ENCODE measurements at regions of chr2 and their contacts with region 1.

Region 1: DNA sequence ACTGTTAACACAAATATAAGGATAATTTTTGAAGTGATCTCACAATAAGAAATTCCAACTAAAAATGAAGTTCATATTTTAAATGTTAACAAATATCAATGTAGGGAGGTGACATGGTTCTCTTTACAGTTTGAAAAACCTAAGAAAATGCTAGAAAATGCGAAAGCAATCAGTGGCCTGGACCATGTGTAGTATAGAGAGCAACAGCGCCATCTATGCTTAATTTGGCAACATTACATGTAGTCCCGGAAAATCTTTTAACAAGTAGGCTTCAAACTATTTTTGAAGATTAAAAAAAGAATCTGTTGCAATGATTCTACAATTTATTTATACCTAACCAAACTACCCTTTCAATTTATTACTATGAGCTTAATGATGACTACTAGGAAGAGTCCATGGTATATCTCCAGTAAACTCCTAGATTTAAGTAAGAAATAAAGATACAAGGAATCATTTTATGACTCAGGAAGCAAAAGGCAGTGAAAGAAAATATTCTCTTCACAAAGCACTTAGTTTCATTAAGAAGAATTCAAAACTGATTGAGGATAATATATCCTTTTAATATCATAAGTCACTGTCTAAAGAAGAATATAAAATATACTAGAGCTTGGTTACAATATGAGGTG is 33.3 kb downstream of the NDUFA10 start:
- DNase-seq: no peak
- H3K4me3 ChIP-seq: no peak overlapping the region
- H3K27ac ChIP-seq: no peak overlapping the region
- H3K4me1 ChIP-seq: no peaks in the 10 kb centered on the region
- H3K27me3 ChIP-seq: no peaks in the 10 kb centered on the region
- CTCF ChIP-seq: peak; percentile 57 to 75 (median 70)
- POLR2A ChIP-seq: no peak

Region 2: GRCh38 chr2:239034561-239035341 is 957.1 kb before region 1 on chr2:
- intact Hi-C with region 1: loop called (anchors 5 kb)
- DNase-seq: no peak
- H3K4me3 ChIP-seq: no peak overlapping the region
- H3K27ac ChIP-seq: no peak overlapping the region
- H3K4me1 ChIP-seq: peaks cover 5% of the 10 kb centered on the region
- H3K27me3 ChIP-seq: no peaks in the 10 kb centered on the region
- CTCF ChIP-seq: no peak
- POLR2A ChIP-seq: no peak

Region 3: GRCh38 chr2:239934571-239935171 is 57.1 kb before region 1 on chr2:
- intact Hi-C with region 1: loop called (anchors 2 kb)
- DNase-seq: no peak
- H3K4me3 ChIP-seq: no peak overlapping the region
- H3K27ac ChIP-seq: no peak overlapping the region
- H3K4me1 ChIP-seq: no peaks in the 10 kb centered on the region
- H3K27me3 ChIP-seq: no peaks in the 10 kb centered on the region
- CTCF ChIP-seq: peak; percentile 39 to 54 (median 53)
- POLR2A ChIP-seq: no peak

Region 4: DNA sequence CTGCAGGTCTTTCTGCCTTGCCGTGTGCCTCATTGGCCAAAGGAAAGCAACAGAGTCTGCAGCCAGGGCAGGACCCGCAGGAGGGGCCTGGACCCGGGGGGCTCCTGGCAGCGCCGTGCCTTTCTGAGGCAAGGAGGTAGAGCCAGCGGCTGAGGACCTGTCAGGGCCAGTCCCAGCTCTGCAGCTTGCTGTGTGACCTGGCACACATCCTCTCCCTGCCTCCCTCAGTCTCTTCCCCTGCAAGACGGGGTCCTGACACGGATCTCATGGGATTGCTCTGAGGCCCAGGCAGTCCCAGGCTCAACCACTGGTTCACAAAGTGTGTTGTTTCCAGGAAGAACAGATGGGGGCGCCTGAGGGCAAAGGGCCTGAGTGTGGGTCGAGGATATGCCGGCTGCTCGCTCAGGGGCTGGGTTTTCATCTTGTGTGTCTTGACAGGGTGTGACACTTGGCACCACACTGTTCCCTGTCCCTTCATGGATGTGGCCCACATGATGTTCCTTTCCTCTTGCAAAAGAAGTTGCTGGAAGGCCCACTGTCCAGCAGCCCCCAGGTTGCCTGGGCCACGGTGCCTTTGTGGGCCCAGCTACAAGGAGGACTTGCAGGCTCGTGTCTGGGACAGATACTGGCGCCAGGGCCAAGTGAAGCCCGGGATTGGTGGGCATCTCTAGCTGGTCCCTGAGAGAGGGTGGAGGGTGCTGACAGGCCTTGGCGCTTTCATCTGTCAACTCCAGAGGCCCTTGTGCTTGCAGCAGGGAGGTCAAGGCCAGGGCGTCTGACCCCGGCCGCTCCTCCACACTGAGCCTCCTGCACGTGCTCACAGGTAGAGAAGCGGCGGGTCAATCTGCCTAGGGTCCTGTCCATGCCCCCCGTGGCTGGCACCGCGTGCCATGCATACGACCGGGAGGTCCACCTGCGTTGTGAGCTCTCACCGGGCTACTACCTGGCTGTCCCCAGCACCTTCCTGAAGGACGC is 604.0 kb after region 1 on chr2:
- intact Hi-C with region 1: no loop called
- DNase-seq: no peak
- H3K4me3 ChIP-seq: no peak overlapping the region
- H3K27ac ChIP-seq: no peak overlapping the region
- H3K4me1 ChIP-seq: no peaks in the 10 kb centered on the region
- H3K27me3 ChIP-seq: no peaks in the 10 kb centered on the region
- CTCF ChIP-seq: no peak
- POLR2A ChIP-seq: no peak

Measured in vagina (tissue), 2 donors.